Mucosa of descending colon (tissue), 3 donors: ENCODE measurements at regions of chr14 and their contacts with region 1.

Region 1: GRCh38 chr14:63388763-63389431 is 70.2 kb upstream of the GPHB5 start:
- DNase-seq: peak; percentile 57 to 82 (median 76)
- ATAC-seq: peak; percentile 90
- H3K4me3 ChIP-seq: no peak overlapping the region
- H3K4me1 ChIP-seq: peaks cover 10% of the 10 kb centered on the region
- CTCF ChIP-seq: peak; percentile 79

Region 2: DNA sequence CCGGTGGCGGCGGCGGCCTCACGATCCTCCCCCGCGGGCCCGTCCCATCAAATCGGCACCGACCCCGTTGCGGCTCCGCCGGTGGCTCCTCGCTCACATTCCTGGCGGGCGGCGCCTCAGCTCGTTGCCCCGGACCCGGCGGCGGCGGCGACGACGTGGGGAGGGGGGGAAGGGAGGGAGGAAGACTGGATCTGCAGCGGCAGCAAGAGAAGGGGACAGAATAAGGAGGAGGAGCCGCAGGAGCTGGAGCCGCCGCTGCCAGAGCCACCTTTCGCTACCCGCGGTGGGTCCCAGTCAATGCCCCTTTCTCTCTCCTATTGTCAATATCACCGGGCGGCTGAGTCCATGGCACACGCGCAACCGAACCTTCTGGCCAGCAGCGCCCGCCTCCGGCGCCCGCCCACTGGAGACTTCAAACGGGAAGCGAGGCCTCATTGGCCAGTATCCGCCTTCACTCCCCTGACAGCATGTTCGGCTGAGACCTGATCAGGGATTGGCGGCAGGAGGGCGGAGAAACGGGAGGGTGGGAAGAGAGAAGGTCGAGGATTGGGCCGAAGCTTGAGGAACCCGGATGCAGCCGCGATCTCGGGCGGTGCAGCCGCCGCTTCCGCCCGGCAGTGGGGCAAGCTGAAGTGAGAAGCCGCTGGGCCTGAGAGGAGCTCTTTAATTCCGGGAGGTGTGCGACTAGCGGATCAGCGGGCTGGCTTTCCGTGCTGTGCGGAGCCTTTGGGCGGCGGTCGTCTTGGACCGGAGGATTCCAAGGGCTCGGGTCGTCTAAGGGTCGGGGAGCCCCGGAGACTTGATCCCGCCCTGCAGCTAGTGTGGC is 154.3 kb after region 1 on chr14 and contains the start of gene PPP2R5E:
- intact Hi-C with region 1: loop called (anchors 5 kb)
- DNase-seq: peak; percentile 98
- ATAC-seq: peak; percentile 97
- H3K4me3 ChIP-seq: peak within 1 kb of the TSS; percentile 86
- H3K4me1 ChIP-seq: peaks cover 19% of the 10 kb centered on the region
- CTCF ChIP-seq: no peak
- total RNA-seq, gene PPP2R5E: 45.3 to 54.1 (median 51.6) TPM

Region 3: DNA sequence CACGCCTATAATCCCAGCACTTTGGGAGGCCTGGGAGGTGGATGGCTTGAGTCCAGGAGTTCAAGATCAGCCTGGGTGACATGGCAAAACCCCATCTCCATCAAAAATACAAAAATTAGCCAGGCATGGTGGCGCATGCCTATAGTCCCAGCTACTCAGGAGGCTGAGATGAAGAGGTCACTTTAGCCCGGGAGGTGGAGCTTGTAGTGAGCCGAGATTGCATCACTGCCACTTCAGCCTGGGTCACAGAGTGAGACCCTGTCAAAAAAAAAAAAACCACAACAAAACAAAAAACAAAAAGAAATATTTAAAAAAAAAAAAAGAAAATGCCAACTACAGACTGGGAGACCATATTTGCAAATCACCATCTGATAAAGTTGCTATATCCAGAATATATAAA is 235.3 kb after region 1 on chr14:
- intact Hi-C with region 1: loop called in 1 of 2 experiments (anchors 10 kb)
- DNase-seq: no peak
- ATAC-seq: no peak
- H3K4me3 ChIP-seq: no peak overlapping the region
- H3K4me1 ChIP-seq: peaks cover 8% of the 10 kb centered on the region
- CTCF ChIP-seq: no peak